ENCODE measurements at regions of chr3 and their contacts with region 1.

Region 1: DNA sequence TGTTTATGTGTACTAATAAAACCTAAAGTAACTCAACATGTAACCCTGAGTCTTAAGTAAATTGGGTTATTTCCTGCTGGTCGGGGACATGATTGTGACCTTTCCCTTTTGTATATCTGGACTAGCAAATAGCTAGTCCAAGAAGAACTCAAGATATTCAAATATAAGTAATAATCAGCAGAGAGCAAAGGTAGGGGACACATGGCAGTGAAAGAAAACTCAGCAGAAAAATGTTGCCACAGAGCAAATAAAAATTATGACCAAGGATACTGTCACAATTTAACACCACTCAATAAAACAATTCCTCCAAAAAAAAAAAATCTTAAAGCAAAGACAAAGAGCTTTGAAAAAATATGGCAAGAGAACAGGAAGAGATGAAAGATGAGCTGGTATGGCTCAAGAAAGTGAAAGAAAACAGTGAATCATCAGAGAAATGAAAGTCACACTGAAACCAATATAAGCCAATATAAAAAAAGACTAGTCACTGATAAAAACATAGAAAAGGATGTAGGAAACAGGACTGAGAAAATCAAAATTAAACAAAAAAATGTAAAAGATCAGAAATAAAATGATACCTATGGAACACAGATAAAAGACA is 43.4 kb downstream of the HLTF start:
- DNase-seq: no peak
- H3K4me3 Mint-ChIP-seq: no peak overlapping the region
- H3K27ac Mint-ChIP-seq: no peak overlapping the region
- H3K4me1 Mint-ChIP-seq: peaks cover 15% of the 10 kb centered on the region
- H3K27me3 Mint-ChIP-seq: no peaks in the 10 kb centered on the region

Region 2: GRCh38 chr3:148790851-148791735 is 251.8 kb before region 1 on chr3:
- CTCF ChIA-PET with region 1: no interaction called
- POLR2A ChIA-PET with region 1: no interaction called
- intact Hi-C with region 1: no loop called
- DNase-seq: no peak
- H3K4me3 Mint-ChIP-seq: no peak overlapping the region
- H3K27ac Mint-ChIP-seq: no peak overlapping the region
- H3K4me1 Mint-ChIP-seq: no peaks in the 10 kb centered on the region
- H3K27me3 Mint-ChIP-seq: no peaks in the 10 kb centered on the region

Region 3: GRCh38 chr3:149009732-149010131 is 33.2 kb before region 1 on chr3:
- CTCF ChIA-PET with region 1: no interaction called
- POLR2A ChIA-PET with region 1: no interaction called
- intact Hi-C with region 1: loop called (anchors 5 kb)
- DNase-seq: peak; percentile 55
- H3K4me3 Mint-ChIP-seq: no peak overlapping the region
- H3K27ac Mint-ChIP-seq: peak overlapping the region; percentile 51
- H3K4me1 Mint-ChIP-seq: peaks cover 11% of the 10 kb centered on the region
- H3K27me3 Mint-ChIP-seq: no peaks in the 10 kb centered on the region

Region 4: DNA sequence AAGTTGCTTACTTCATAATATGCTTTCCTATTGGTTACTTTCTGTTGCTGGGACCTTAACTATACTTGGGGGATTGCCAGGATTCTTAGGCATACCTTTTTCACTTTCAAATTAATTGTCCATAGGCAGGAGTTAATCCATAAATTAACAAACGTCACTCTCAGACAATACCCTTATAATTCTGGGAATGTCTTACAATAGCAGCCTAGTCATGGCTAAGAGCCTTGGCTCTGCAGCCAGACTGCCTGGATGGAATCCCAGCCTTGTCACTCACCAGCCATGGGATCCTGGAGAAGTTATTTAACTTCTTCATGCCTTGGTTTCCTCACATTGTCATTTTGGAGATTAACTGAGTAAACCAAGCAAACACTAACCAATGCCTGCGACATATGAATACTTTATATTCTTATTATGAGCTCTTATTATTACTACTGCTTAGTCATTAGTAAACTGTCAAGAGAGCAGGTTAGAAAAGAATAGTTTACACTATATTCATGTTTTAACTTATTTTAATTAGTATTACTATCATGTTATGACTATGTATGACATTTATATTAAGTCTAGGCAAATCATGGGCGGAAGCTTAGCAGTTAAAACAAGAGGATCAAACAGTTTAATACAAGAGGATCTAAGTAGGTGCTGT is 22.6 kb before region 1 on chr3:
- CTCF ChIA-PET with region 1: no interaction called
- POLR2A ChIA-PET with region 1: no interaction called
- intact Hi-C with region 1: loop called (anchors 1 kb)
- DNase-seq: no peak
- H3K4me3 Mint-ChIP-seq: no peak overlapping the region
- H3K27ac Mint-ChIP-seq: peak overlapping the region; percentile 39
- H3K4me1 Mint-ChIP-seq: peaks cover 33% of the 10 kb centered on the region
- H3K27me3 Mint-ChIP-seq: no peaks in the 10 kb centered on the region

Region 5: DNA sequence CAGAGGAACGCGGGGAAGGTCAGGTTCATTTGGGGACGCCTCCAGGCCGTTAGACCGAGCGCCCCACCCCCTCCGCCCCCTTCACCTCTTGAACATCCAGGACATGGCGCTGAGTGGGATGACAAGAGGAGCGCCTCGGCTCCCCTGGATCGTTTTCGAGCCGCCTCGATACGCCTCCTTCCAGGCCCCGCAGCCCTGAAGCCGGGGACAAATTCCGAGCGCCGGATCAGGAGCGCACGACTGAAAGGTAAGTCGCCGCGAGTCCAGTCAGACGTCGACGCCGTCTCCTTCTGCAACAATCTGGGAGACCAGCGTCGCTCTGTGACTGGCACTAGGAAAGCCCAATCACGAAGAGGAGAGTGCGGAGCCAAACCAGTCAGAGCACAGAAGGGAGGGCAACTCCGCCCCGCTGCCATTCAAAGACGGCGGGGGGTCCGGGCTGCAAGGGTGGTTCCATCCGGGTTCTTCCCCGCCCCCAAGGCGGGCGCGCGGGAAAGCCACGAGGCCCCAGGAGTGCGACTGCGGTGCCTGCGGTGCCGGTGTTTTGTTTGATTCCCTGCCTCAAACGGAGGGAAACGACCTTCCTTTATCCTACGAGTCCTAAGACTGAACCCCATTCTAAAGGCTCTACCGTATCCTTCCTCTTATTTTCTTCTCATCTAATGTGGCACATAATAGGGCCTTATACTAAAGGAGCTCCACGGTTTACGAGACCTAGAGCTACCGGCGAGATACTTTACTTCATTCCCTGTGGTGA is 43.5 kb after region 1 on chr3 and contains the start of gene HLTF:
- CTCF ChIA-PET with region 1: no interaction called
- POLR2A ChIA-PET with region 1: no interaction called
- intact Hi-C with region 1: loop called (anchors 2 kb)
- DNase-seq: peak; percentile 93
- H3K4me3 Mint-ChIP-seq: peak within 1 kb of the TSS; percentile 95
- H3K27ac Mint-ChIP-seq: peak within 1 kb of the TSS; percentile 56
- H3K4me1 Mint-ChIP-seq: peaks cover 16% of the 10 kb centered on the region
- H3K27me3 Mint-ChIP-seq: no peaks in the 10 kb centered on the region
- total RNA-seq, gene HLTF: 22.3 to 25.1 TPM

Region 6: GRCh38 chr3:149393345-149394160 is 350.7 kb after region 1 on chr3:
- CTCF ChIA-PET with region 1: no interaction called
- POLR2A ChIA-PET with region 1: no interaction called
- intact Hi-C with region 1: no loop called
- DNase-seq: peak; percentile 50
- H3K4me3 Mint-ChIP-seq: no peak overlapping the region
- H3K27ac Mint-ChIP-seq: no peak overlapping the region
- H3K4me1 Mint-ChIP-seq: no peaks in the 10 kb centered on the region
- H3K27me3 Mint-ChIP-seq: no peaks in the 10 kb centered on the region

Measured in activated CD4-positive, alpha-beta memory T cell treated with anti-CD3 and anti-CD28 coated beads for 36 hours (primary cell).